Activated naive CD4-positive, alpha-beta T cell treated with anti-CD3 and anti-CD28 coated beads for 36 hours (primary cell): ENCODE measurements at regions of chr6 and their contacts with region 1.

Region 1: DNA sequence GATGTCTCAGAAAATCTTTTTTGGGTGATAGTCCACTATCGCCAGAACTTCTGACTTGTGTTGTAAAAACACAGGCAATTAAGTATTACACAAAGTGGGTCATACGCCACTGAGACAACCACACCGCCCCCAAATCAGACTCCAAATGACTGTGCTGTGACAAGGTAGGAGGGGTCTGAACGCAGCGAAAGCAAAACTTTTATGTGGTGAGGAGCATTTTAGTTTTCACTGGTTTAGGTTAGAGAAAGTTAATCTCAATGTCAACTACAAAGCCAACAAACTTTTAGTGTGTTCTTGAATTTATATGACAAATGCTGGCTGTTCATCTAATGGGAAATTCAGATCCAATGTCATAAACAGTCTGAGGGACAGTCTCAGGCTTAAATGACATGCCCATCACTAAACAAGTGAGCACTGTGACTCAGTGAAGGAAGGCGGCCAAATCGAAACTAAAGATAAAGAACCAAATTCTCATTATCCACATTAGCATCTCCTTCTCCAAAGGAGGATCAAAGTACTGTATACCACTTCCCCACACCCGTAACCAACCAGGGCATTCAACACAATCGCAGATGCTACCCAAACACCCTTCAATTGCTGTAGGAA is 186.7 kb downstream of the GJA10 start:
- DNase-seq: peak; percentile 94
- H3K4me3 Mint-ChIP-seq: peak overlapping the region; percentile 89
- H3K27ac Mint-ChIP-seq: peak overlapping the region; percentile 94
- H3K4me1 Mint-ChIP-seq: peaks cover 88% of the 10 kb centered on the region
- H3K27me3 Mint-ChIP-seq: no peaks in the 10 kb centered on the region

Region 2: GRCh38 chr6:89829591-89830385 is 251.2 kb before region 1 on chr6 and contains the start of gene CASP8AP2:
- CTCF ChIA-PET with region 1: no interaction called
- intact Hi-C with region 1: loop called (anchors 10 kb)
- DNase-seq: peak; percentile 98
- H3K4me3 Mint-ChIP-seq: peak within 1 kb of the TSS; percentile 99
- H3K27ac Mint-ChIP-seq: peak within 1 kb of the TSS; percentile 96
- H3K4me1 Mint-ChIP-seq: peaks cover 33% of the 10 kb centered on the region
- H3K27me3 Mint-ChIP-seq: no peaks in the 10 kb centered on the region
- total RNA-seq, gene CASP8AP2: 27.4 to 30.2 TPM

Region 3: GRCh38 chr6:90025523-90026061 is 55.4 kb before region 1 on chr6:
- CTCF ChIA-PET with region 1: no interaction called
- intact Hi-C with region 1: loop called (anchors 1 kb)
- DNase-seq: peak; percentile 85
- H3K4me3 Mint-ChIP-seq: peak overlapping the region; percentile 47
- H3K27ac Mint-ChIP-seq: peak overlapping the region; percentile 87
- H3K4me1 Mint-ChIP-seq: peaks cover 93% of the 10 kb centered on the region
- H3K27me3 Mint-ChIP-seq: no peaks in the 10 kb centered on the region

Region 4: GRCh38 chr6:90110971-90111370 is 30.0 kb after region 1 on chr6:
- CTCF ChIA-PET with region 1: interaction called, 14 read pairs
- intact Hi-C with region 1: loop called (anchors 1 kb)
- DNase-seq: peak; percentile 65
- H3K4me3 Mint-ChIP-seq: peak overlapping the region; percentile 2
- H3K27ac Mint-ChIP-seq: peak overlapping the region; percentile 31
- H3K4me1 Mint-ChIP-seq: peaks cover 86% of the 10 kb centered on the region
- H3K27me3 Mint-ChIP-seq: no peaks in the 10 kb centered on the region

Region 5: DNA sequence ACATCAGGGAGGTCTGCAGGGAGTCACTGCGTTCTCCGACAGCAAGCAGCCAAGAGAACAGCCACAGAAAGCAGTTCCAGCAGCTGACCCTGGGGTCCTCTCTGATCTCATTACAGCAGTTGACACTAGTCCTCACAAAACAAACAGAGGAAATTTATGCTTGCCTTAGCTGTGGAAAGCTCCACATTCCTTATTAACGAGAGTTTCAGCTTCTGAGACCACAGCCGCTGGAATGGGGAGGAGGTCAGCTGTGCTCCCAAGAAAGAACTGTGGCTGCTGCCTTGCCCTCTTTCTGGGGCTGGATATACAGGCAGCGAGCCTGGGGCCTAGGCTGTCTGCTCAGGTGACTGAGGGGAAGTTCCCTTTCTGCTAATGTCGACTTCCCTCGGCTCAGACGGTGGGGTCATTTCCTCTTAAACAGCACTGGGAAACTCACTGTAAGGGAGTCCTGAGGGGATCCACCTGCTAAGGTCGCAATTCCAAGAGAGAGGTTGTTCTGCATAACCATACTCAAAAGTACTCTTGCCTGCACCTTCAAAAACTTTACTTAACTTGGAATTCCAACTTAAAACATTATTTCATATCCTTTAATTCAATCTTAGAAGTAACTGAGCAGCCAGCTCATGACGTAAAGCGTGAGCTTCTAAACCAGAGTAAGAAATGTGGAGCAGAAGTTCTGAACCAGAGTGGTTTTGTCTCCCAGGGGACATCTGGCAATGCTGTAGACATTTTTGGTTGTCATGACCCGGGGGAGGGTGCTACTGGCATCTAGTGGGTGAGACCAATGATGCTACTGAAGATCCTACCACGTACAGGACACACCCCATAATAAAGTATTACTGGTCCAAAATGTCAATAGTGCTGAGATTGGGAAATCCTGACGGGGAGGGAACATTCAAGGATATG is 135.3 kb after region 1 on chr6:
- CTCF ChIA-PET with region 1: interaction called, 4 read pairs
- intact Hi-C with region 1: loop called (anchors 1 kb)
- DNase-seq: peak; percentile 76
- H3K4me3 Mint-ChIP-seq: peak overlapping the region; percentile 14
- H3K27ac Mint-ChIP-seq: no peak overlapping the region
- H3K4me1 Mint-ChIP-seq: peaks cover 32% of the 10 kb centered on the region
- H3K27me3 Mint-ChIP-seq: no peaks in the 10 kb centered on the region

Region 6: GRCh38 chr6:90296346-90297114 is 215.6 kb after region 1 on chr6 and contains the start of gene BACH2:
- CTCF ChIA-PET with region 1: no interaction called
- intact Hi-C with region 1: loop called (anchors 1 kb)
- DNase-seq: peak; percentile 99
- H3K4me3 Mint-ChIP-seq: peak within 1 kb of the TSS; percentile 86
- H3K27ac Mint-ChIP-seq: peak within 1 kb of the TSS; percentile 97
- H3K4me1 Mint-ChIP-seq: peaks cover 41% of the 10 kb centered on the region
- H3K27me3 Mint-ChIP-seq: peaks cover 2% of the 10 kb centered on the region
- total RNA-seq, gene BACH2: 75.1 to 77.9 TPM

Region 7: GRCh38 chr6:90472744-90473143 is 391.8 kb after region 1 on chr6:
- CTCF ChIA-PET with region 1: interaction called, 3 read pairs
- intact Hi-C with region 1: loop called (anchors 1 kb)
- DNase-seq: peak; percentile 61
- H3K4me3 Mint-ChIP-seq: peak overlapping the region; percentile 48
- H3K27ac Mint-ChIP-seq: peak overlapping the region; percentile 92
- H3K4me1 Mint-ChIP-seq: peaks cover 86% of the 10 kb centered on the region
- H3K27me3 Mint-ChIP-seq: no peaks in the 10 kb centered on the region